Activated CD8-positive, alpha-beta memory T cell treated with anti-CD3 and anti-CD28 coated beads, Interleukin-2, amount 10 ng/mL, durations not matched to agents 7 days and 5 days (primary cell): ENCODE measurements at regions of chr5 and their contacts with region 1.

Region 1: GRCh38 chr5:140244525-140245025 is 58.3 kb downstream of the PFDN1 start:
- DNase-seq: peak; percentile 86
- ATAC-seq: peak; percentile 71
- H3K4me3 Mint-ChIP-seq: no peak overlapping the region
- H3K27ac Mint-ChIP-seq: no peak overlapping the region
- H3K4me1 Mint-ChIP-seq: peaks cover 39% of the 10 kb centered on the region
- H3K27me3 Mint-ChIP-seq: no peaks in the 10 kb centered on the region

Region 2: GRCh38 chr5:140228364-140228837 is 16.2 kb before region 1 on chr5:
- CTCF ChIA-PET with region 1: interaction called, 10 read pairs
- DNase-seq: no peak
- ATAC-seq: no peak
- H3K4me3 Mint-ChIP-seq: no peak overlapping the region
- H3K27ac Mint-ChIP-seq: no peak overlapping the region
- H3K4me1 Mint-ChIP-seq: no peaks in the 10 kb centered on the region
- H3K27me3 Mint-ChIP-seq: no peaks in the 10 kb centered on the region

Region 3: GRCh38 chr5:140261403-140262171 is 17.0 kb after region 1 on chr5:
- CTCF ChIA-PET with region 1: interaction called, 12 read pairs
- DNase-seq: no peak
- ATAC-seq: peak; percentile 72
- H3K4me3 Mint-ChIP-seq: no peak overlapping the region
- H3K27ac Mint-ChIP-seq: peak overlapping the region; percentile 2
- H3K4me1 Mint-ChIP-seq: peaks cover 63% of the 10 kb centered on the region
- H3K27me3 Mint-ChIP-seq: no peaks in the 10 kb centered on the region

Region 4: GRCh38 chr5:140346348-140347101 is 102.0 kb after region 1 on chr5 and contains the start of gene HBEGF:
- CTCF ChIA-PET with region 1: interaction called, 657 read pairs
- DNase-seq: peak; percentile 60
- ATAC-seq: peak; percentile 72
- H3K4me3 Mint-ChIP-seq: peak within 1 kb of the TSS; percentile 80
- H3K27ac Mint-ChIP-seq: peak within 1 kb of the TSS; percentile 68
- H3K4me1 Mint-ChIP-seq: peaks cover 59% of the 10 kb centered on the region
- H3K27me3 Mint-ChIP-seq: peaks cover 15% of the 10 kb centered on the region
- total RNA-seq, gene HBEGF: 10.7 to 13.5 TPM

Region 5: GRCh38 chr5:140357726-140358093 is 113.1 kb after region 1 on chr5:
- CTCF ChIA-PET with region 1: interaction called, 657 read pairs
- DNase-seq: peak; percentile 89
- ATAC-seq: peak; percentile 97
- H3K4me3 Mint-ChIP-seq: peak overlapping the region; percentile 64
- H3K27ac Mint-ChIP-seq: peak overlapping the region; percentile 56
- H3K4me1 Mint-ChIP-seq: peaks cover 19% of the 10 kb centered on the region
- H3K27me3 Mint-ChIP-seq: peaks cover 2% of the 10 kb centered on the region